Dorsolateral prefrontal cortex (tissue), 120 donors: ENCODE measurements at regions of chr3 and their contacts with region 1.

Region 1: DNA sequence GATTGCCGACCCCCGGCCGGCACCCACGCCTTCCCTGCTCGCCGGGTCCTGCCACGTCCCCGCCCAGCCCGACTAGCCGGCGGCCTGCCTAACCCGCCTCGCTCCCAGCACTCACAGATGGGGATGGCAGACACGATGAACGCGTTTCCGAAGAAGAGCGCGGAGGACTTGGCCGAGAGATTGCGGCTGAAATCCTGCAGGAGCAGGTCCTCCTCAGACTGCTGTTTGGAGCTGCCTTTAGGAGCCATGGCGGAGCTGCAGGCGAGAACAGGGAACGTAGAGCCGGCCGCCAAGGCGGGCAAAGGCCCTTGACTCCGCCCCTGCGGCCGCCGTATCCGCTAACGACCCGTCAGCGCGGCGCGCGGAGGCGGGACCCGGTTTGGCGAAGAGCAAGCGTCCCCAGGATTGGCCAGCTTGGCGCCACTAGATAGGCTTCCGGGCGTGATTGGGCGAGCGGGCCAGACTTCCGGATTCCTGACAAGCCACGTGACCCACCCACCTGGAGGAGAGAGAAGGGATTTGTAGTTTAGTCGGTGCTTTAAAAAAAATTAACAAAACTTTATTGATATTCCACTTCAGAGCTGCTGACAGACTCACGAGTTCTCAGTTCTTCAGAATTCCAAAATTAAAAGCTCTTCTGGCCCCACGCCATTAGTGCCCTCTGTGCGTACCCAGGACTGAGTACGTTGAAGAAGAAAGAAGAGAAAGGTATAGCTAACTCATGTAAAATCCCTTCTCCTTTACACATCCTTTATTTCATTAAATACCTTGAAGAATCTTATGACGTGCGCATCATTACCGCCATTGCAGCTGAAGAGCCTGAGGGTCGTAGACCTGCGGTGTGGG is at the start of gene SSR3:
- DNase-seq: peak; percentile 98 to 99 (median 99)
- H3K4me3 ChIP-seq: peak within 1 kb of the TSS; percentile 64 to 99 (median 92)
- H3K27ac ChIP-seq: peak within 1 kb of the TSS in 58 of 59 donors; percentile 37 to 96 (median 81)
- H3K27me3 ChIP-seq: no peaks in the 10 kb centered on the region
- CTCF ChIP-seq: peak in 40 of 56 donors; percentile 11 to 61 (median 32)
- total RNA-seq, gene SSR3: 62.7 to 123 (median 86.2) TPM

Region 2: GRCh38 chr3:156674046-156674910 is 119.2 kb after region 1 on chr3 and contains the start of gene TIPARP:
- intact Hi-C with region 1: loop called (anchors 2 kb)
- DNase-seq: peak; percentile 96 to 99 (median 98)
- H3K4me3 ChIP-seq: peak within 1 kb of the TSS; percentile 66 to 98 (median 89)
- H3K27ac ChIP-seq: peak within 1 kb of the TSS; percentile 65 to 97 (median 93)
- H3K27me3 ChIP-seq: no peaks in the 10 kb centered on the region
- CTCF ChIP-seq: peak; percentile 44 to 98 (median 83)
- total RNA-seq, gene TIPARP: 13.7 to 81.5 (median 24.6) TPM

Region 3: GRCh38 chr3:156826144-156826895 is 271.3 kb after region 1 on chr3 and contains the start of gene LEKR1:
- intact Hi-C with region 1: loop called (anchors 10 kb)
- DNase-seq: peak; percentile 55 to 88 (median 80)
- H3K4me3 ChIP-seq: peak within 1 kb of the TSS; percentile 55 to 93 (median 78)
- H3K27ac ChIP-seq: peak within 1 kb of the TSS; percentile 30 to 94 (median 83)
- H3K27me3 ChIP-seq: no peaks in the 10 kb centered on the region
- CTCF ChIP-seq: peak in 19 of 56 donors; percentile 6 to 34 (median 16)
- total RNA-seq, gene LEKR1: 0.25 to 7.8 (median 1.3) TPM in 114 of 120 experiments, not detected in the others

Region 4: DNA sequence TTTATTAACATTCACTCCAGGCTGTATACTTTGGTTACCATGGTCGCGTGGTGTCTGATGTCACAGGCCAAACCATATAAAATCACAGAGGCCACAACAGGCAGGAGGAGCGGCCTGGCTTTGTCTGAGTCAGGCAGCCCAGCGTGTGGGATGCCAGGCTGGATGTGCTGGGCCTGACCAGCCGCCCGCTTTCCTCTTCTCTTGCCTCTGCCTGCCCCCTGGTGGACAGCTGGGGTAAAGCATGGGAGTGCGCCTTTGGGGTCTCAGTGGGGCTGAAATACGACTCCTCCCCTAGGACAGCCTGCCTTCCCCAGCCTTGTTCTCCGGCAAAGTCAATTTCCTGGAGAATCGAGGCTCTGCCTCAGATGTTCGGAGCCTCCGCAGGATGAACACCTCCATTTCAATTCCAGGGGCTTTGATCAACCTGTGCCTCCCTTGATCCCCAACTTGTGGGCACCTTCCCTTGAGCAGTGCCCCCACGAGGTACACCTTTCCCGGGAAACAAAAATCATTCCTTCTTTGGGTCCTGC is 526.7 kb after region 1 on chr3:
- intact Hi-C with region 1: loop called (anchors 2 to 5 kb)
- DNase-seq: peak; percentile 90 to 93 (median 92)
- H3K4me3 ChIP-seq: peak overlapping the region in 12 of 59 donors; percentile 7 to 31 (median 16)
- H3K27ac ChIP-seq: peak overlapping the region; percentile 9 to 96 (median 86)
- H3K27me3 ChIP-seq: no peaks in the 10 kb centered on the region
- CTCF ChIP-seq: peak; percentile 89 to 100 (median 98)

Region 5: GRCh38 chr3:157088601-157089454 is 533.8 kb after region 1 on chr3:
- intact Hi-C with region 1: loop called in 1 of 2 experiments (anchors 5 kb)
- DNase-seq: peak; percentile 90 to 97 (median 94)
- H3K4me3 ChIP-seq: peak overlapping the region; percentile 49 to 91 (median 74)
- H3K27ac ChIP-seq: peak overlapping the region; percentile 95 to 100 (median 100)
- H3K27me3 ChIP-seq: no peaks in the 10 kb centered on the region
- CTCF ChIP-seq: peak in 45 of 56 donors; percentile 12 to 59 (median 38)

Region 6: GRCh38 chr3:157136647-157137387 is 581.8 kb after region 1 on chr3:
- intact Hi-C with region 1: loop called in 1 of 2 experiments (anchors 5 kb)
- DNase-seq: no peak
- H3K4me3 ChIP-seq: peak overlapping the region in 17 of 59 donors; percentile 17 to 63 (median 49)
- H3K27ac ChIP-seq: peak overlapping the region; percentile 60 to 100 (median 96)
- H3K27me3 ChIP-seq: no peaks in the 10 kb centered on the region
- CTCF ChIP-seq: no peak